ENCODE measurements at regions of chrX and their contacts with region 1.

Region 1: DNA sequence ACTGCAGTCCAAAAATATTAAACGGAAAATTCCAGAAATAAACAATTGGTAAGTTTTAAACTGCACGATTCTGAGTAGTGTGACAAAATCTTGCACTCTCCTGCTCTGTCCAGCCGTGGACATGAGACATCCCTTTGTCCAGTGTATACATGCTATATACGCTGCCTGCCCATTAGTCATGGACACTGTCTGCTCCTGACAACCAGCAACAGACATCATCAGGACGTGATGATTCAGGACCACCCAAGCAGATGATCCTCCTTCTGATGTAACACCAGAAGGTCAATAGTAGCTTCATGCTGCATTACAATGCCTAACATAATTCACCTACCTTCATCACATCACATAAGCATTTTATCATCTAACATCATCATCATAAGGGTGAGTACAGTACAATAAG is 36.3 kb downstream of the ATRX start:
- DNase-seq: peak; percentile 9
- ATAC-seq: peak; percentile 80
- H3K4me3 ChIP-seq: no peak overlapping the region
- H3K27ac ChIP-seq: no peak overlapping the region
- H3K4me1 ChIP-seq: no peaks in the 10 kb centered on the region
- H3K27me3 ChIP-seq: no peaks in the 10 kb centered on the region
- CTCF ChIP-seq: no peak

Region 2: GRCh38 chrX:77640702-77641101 is 109.0 kb before region 1 on chrX:
- CTCF ChIA-PET with region 1: no interaction called
- POLR2A ChIA-PET with region 1: no interaction called
- intact Hi-C with region 1: no loop called
- DNase-seq: no peak
- ATAC-seq: no peak
- H3K4me3 ChIP-seq: no peak overlapping the region
- H3K27ac ChIP-seq: no peak overlapping the region
- H3K4me1 ChIP-seq: no peaks in the 10 kb centered on the region
- H3K27me3 ChIP-seq: no peaks in the 10 kb centered on the region
- CTCF ChIP-seq: no peak

Region 3: GRCh38 chrX:77779695-77780094 is 30.0 kb after region 1 on chrX:
- CTCF ChIA-PET with region 1: interaction called, 5 read pairs
- POLR2A ChIA-PET with region 1: no interaction called
- intact Hi-C with region 1: loop called (anchors 5 kb)
- DNase-seq: no peak
- ATAC-seq: no peak
- H3K4me3 ChIP-seq: no peak overlapping the region
- H3K27ac ChIP-seq: no peak overlapping the region
- H3K4me1 ChIP-seq: peaks cover 14% of the 10 kb centered on the region
- H3K27me3 ChIP-seq: no peaks in the 10 kb centered on the region
- CTCF ChIP-seq: no peak

Region 4: DNA sequence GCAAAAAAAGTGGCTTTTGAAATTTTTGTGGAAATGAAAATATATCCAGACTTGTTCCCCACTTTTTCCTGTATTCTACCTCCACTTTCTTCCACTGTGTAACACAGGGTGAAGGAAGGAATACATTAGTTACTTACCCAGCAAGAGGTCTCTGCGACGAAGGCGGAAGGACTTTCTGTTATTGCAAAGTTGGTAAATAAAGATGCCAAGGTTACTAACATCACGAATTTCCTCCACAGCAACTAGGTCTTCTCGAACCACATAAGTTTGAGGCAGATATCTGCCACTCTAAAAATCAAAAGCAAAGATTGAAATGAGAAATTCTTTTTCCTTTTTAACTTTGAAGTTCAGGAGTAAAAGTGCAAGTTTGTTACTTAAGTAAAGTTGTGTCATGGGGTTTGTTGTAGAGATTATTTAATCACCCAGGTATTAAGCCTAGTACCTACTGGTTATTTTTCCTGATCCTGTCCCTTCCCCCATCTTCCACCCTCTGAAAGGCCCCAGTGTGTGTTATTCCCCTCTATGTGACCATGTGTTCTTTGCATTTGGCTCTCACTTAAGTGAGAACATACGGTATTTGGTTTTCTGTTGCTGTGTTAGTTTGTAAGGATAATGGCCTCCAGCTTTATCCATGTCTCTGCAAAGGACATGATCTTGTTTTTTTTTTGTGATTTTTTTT is 1611.6 kb after region 1 on chrX:
- CTCF ChIA-PET with region 1: no interaction called
- POLR2A ChIA-PET with region 1: no interaction called
- intact Hi-C with region 1: no loop called
- DNase-seq: no peak
- ATAC-seq: no peak
- H3K4me3 ChIP-seq: no peak overlapping the region
- H3K27ac ChIP-seq: no peak overlapping the region
- H3K4me1 ChIP-seq: no peaks in the 10 kb centered on the region
- H3K27me3 ChIP-seq: no peaks in the 10 kb centered on the region
- CTCF ChIP-seq: no peak

Measured in PC-3 (cell line).